BJ (cell line): ENCODE measurements at regions of chr11 and their contacts with region 1.

Region 1: DNA sequence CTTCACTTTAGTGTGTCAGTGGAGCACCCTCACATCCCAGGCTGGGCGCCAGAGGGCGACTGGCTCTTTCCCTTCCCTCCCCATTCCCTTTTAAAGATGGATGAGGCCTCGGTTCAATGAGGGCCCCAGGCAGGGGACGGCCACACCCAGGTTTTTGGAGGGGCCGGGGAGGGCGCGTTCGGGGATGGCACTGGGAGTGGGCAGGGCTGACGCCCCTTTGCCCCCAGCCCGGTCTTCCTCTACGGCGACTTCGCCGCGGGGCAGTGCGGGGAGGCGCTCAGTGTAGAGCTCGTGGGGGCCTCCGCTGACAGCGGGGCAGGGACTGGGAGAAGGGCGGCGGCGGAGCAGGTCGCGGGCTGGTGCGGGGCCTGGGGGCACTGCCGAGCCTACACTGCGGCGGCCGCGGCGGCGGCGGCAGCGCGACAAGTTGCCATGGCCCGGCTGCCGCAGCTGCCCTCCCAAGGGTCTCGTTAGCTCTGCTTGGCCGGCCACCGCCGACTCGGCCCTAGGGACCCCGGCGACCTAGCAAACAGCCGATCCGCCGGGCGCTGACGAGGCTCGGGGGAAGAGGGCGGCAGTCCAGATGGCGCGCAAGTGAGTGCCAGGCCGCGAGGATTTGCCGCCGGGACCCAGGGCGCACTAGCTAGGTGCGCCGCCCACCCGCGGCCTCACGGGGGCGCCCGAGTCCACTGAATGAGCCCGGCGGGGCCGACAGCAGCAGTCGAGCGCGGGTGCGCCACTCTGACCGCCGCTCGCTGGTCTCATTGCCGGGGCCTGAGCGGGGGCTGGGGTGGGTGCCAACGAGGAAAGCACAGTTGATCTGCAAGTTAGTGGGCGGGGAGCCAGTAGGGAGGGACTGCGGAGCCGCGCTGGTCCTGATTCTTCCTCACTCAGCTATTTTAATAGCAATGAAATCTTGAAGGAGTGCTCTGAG is 92.7 kb downstream of the RRM1 start:
- DNase-seq: peak; percentile 39
- H3K4me3 ChIP-seq: peak overlapping the region; percentile 60
- H3K27me3 ChIP-seq: no peaks in the 10 kb centered on the region
- CTCF ChIP-seq: peak; percentile 83

Region 2: GRCh38 chr11:3984896-3985295 is 202.4 kb before region 1 on chr11:
- CTCF ChIA-PET with region 1: no interaction called
- POLR2A ChIA-PET with region 1: no interaction called
- DNase-seq: no peak
- H3K4me3 ChIP-seq: no peak overlapping the region
- H3K27me3 ChIP-seq: no peaks in the 10 kb centered on the region
- CTCF ChIP-seq: no peak; the same call in 1 of the 2 replicates

Region 3: GRCh38 chr11:4480574-4481566 is 293.5 kb after region 1 on chr11:
- CTCF ChIA-PET with region 1: interaction called, 10 read pairs
- POLR2A ChIA-PET with region 1: no interaction called
- DNase-seq: no peak
- H3K4me3 ChIP-seq: no peak overlapping the region
- H3K27me3 ChIP-seq: peaks cover 2% of the 10 kb centered on the region; the same call in 1 of the 2 replicates
- CTCF ChIP-seq: no peak

Region 4: DNA sequence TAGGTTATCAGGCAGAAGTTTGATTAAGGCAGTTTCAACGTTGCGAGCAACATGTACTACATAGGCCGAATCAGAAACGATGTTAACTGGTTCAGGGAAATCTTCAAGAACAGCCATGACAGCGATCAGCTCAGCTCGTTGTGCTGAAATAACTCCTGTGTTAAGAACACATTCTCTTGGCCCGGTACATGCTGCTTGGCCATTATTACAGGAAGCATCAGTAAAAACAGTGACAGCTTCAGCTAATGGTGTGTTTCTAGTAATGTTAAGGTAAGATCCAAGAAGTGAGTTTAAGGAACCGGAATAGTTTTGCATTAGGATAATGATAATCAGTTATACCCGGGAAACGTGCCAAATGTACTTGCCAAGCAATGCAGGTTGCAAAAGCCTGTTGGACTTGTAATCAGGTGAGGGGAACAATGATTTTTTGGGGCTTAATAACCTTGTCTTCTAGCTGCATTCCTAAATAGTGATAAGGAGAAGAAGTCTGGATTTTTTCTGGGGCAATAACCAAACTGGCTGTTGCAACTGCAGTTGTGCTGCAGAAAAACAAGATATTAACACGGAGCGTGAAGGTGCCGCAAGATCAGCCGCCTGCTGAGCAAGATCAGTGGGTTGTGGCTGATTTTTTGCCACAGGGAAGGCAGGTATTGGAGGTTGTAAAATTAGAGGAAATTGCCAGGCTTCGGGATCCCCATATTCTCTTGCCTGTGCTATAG is 309.4 kb after region 1 on chr11:
- CTCF ChIA-PET with region 1: interaction called, 109 read pairs
- POLR2A ChIA-PET with region 1: no interaction called
- DNase-seq: no peak
- H3K4me3 ChIP-seq: no peak overlapping the region
- H3K27me3 ChIP-seq: peaks cover 6% of the 10 kb centered on the region
- CTCF ChIP-seq: no peak

Region 5: GRCh38 chr11:4523666-4524065 is 336.3 kb after region 1 on chr11:
- CTCF ChIA-PET with region 1: interaction called, 13 read pairs
- POLR2A ChIA-PET with region 1: no interaction called
- DNase-seq: no peak
- H3K4me3 ChIP-seq: no peak overlapping the region
- H3K27me3 ChIP-seq: no peaks in the 10 kb centered on the region
- CTCF ChIP-seq: no peak

Region 6: DNA sequence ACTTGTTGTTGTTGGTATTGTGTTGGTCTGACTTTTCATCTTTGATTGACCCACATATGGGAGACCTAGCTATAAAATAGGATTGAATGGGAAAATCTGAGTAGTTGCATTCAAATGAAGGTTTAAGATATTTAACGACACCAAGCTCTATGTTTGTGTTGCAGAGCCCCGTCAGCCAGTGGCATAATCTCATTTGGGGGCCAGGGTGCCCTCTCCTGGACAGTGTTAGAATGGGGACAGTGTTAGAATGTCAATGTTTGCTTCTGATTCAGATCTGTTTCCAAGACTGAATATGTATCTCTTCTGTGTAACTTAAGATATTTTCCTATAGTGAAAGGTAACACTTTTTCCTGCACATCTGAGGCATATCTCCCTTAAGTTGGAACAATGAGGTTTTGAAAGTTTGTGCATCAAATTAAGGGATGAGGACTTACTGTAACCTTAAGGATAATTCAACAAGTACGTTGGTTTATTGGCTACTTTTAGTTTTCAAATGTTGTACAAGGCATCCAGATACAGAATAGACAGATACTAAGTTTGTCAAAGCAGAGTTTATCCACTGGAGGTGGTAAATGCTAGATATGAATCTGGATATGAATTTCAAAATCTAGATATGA is 352.4 kb after region 1 on chr11:
- CTCF ChIA-PET with region 1: interaction called, 116 read pairs
- POLR2A ChIA-PET with region 1: interaction called, 5 read pairs
- DNase-seq: no peak
- H3K4me3 ChIP-seq: no peak overlapping the region
- H3K27me3 ChIP-seq: no peaks in the 10 kb centered on the region
- CTCF ChIP-seq: peak; percentile 72

Region 7: GRCh38 chr11:4636962-4637661 is 449.8 kb after region 1 on chr11 and contains the start of gene OR51D1:
- CTCF ChIA-PET with region 1: interaction called, 12 read pairs
- POLR2A ChIA-PET with region 1: no interaction called
- DNase-seq: no peak
- H3K4me3 ChIP-seq: no peak within 1 kb of the TSS
- H3K27me3 ChIP-seq: no peaks in the 10 kb centered on the region
- CTCF ChIP-seq: peak; percentile 89
- polyA plus RNA-seq, gene OR51D1: not detected in 2 replicates